ENCODE measurements at regions of chr4 and their contacts with region 1.

Region 1: GRCh38 chr4:143178923-143179322 is 5.8 kb upstream of the USP38 start:
- DNase-seq: peak; percentile 77
- ATAC-seq: peak; percentile 24; the same call in 1 of the 2 replicates
- H3K4me3 ChIP-seq: no peak overlapping the region
- H3K27ac ChIP-seq: no peak overlapping the region
- H3K4me1 ChIP-seq: peaks cover 24% of the 10 kb centered on the region
- H3K27me3 ChIP-seq: no peaks in the 10 kb centered on the region
- CTCF ChIP-seq: no peak; the same call in 1 of the 2 replicates

Region 2: GRCh38 chr4:142984871-142985585 is 193.9 kb before region 1 on chr4:
- CTCF ChIA-PET with region 1: interaction called, 7 read pairs
- POLR2A ChIA-PET with region 1: no interaction called
- intact Hi-C with region 1: loop called (anchors 2 kb)
- DNase-seq: peak; percentile 60
- ATAC-seq: peak; percentile 82
- H3K4me3 ChIP-seq: no peak overlapping the region
- H3K27ac ChIP-seq: no peak overlapping the region
- H3K4me1 ChIP-seq: no peaks in the 10 kb centered on the region
- H3K27me3 ChIP-seq: peaks cover 53% of the 10 kb centered on the region
- CTCF ChIP-seq: peak; percentile 83

Region 3: GRCh38 chr4:143358923-143359643 is 180.2 kb after region 1 on chr4:
- CTCF ChIA-PET with region 1: no interaction called
- POLR2A ChIA-PET with region 1: no interaction called
- intact Hi-C with region 1: no loop called
- DNase-seq: peak; percentile 91
- ATAC-seq: peak; percentile 52
- H3K4me3 ChIP-seq: peak overlapping the region; percentile 18; the same call in 1 of the 2 replicates
- H3K27ac ChIP-seq: peak overlapping the region; percentile 83
- H3K4me1 ChIP-seq: peaks cover 50% of the 10 kb centered on the region
- H3K27me3 ChIP-seq: no peaks in the 10 kb centered on the region
- CTCF ChIP-seq: no peak

Region 4: GRCh38 chr4:143417679-143418403 is 238.9 kb after region 1 on chr4:
- CTCF ChIA-PET with region 1: no interaction called
- POLR2A ChIA-PET with region 1: no interaction called
- intact Hi-C with region 1: no loop called
- DNase-seq: no peak
- ATAC-seq: no peak
- H3K4me3 ChIP-seq: no peak overlapping the region
- H3K27ac ChIP-seq: no peak overlapping the region
- H3K4me1 ChIP-seq: no peaks in the 10 kb centered on the region
- H3K27me3 ChIP-seq: no peaks in the 10 kb centered on the region
- CTCF ChIP-seq: no peak